Activated naive CD4-positive, alpha-beta T cell treated with anti-CD3 and anti-CD28 coated beads for 36 hours (primary cell): ENCODE measurements at regions of chr6 and their contacts with region 1.

Region 1: GRCh38 chr6:56359201-56359899 is 112.0 kb upstream of the COL21A1 start:
- DNase-seq: peak; percentile 82
- H3K4me3 Mint-ChIP-seq: no peak overlapping the region
- H3K27ac Mint-ChIP-seq: no peak overlapping the region
- H3K4me1 Mint-ChIP-seq: no peaks in the 10 kb centered on the region
- H3K27me3 Mint-ChIP-seq: no peaks in the 10 kb centered on the region

Region 2: DNA sequence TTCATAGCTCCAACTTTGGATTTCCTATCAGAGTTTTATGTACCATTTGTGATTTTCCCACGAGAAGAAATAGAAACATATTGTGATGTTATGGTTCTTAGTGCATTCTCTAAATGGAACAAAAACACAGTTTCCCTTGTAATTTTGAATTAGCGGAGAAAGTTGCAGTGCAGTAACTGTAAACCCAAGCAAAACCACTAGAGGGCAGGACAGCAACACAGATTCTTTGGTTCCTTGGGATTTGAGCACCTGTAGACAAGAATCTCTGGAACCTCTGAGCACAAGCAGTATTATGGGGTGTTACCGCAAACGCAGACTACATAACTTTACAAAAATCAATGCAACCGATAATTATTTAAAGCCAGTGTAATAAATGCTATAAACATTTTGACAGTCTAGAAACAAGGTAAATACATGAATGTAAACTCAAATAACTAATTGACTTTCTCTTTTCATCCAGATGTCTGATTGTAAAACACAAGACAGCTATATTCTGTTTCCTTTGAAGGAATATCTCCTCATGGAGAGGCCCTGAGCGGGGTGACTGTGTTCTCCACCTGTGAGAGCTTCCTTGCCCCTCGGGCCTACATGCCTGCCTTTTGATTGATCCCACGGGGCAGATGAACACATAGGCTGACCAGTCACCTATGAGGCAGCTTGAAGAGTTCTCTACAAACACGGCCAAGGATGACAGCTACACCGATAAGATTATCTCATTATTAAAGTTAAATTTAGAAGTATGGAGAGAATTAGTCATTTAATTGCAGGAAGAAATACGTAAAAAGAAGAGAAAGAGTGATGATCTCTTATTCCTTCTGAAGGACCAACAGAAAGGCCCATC is 44.4 kb before region 1 on chr6:
- CTCF ChIA-PET with region 1: interaction called, 3 read pairs
- intact Hi-C with region 1: loop called (anchors 1 kb)
- DNase-seq: peak; percentile 21
- H3K4me3 Mint-ChIP-seq: no peak overlapping the region
- H3K27ac Mint-ChIP-seq: no peak overlapping the region
- H3K4me1 Mint-ChIP-seq: no peaks in the 10 kb centered on the region
- H3K27me3 Mint-ChIP-seq: no peaks in the 10 kb centered on the region

Region 3: DNA sequence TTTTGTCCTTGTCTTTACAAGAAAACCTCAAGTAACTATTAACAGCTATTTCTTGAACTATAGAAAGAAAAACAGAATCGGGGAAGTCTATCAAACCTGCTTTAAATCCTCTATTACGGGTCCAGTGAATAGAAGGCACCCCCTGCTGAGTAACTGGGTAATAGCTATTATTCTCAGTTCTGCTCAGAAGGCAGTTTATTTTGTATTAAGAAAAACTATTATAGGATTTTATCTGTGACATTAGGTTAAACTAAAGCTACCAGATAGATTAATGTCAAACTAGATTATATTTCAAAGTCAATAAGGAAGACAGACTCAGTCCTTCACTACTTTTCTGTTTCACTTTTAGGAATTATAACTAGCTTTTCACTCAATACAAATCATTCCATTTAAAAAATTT is 189.7 kb after region 1 on chr6:
- CTCF ChIA-PET with region 1: interaction called, 3 read pairs
- intact Hi-C with region 1: loop called (anchors 1 kb)
- DNase-seq: no peak
- H3K4me3 Mint-ChIP-seq: no peak overlapping the region
- H3K27ac Mint-ChIP-seq: no peak overlapping the region
- H3K4me1 Mint-ChIP-seq: no peaks in the 10 kb centered on the region
- H3K27me3 Mint-ChIP-seq: no peaks in the 10 kb centered on the region

Region 4: DNA sequence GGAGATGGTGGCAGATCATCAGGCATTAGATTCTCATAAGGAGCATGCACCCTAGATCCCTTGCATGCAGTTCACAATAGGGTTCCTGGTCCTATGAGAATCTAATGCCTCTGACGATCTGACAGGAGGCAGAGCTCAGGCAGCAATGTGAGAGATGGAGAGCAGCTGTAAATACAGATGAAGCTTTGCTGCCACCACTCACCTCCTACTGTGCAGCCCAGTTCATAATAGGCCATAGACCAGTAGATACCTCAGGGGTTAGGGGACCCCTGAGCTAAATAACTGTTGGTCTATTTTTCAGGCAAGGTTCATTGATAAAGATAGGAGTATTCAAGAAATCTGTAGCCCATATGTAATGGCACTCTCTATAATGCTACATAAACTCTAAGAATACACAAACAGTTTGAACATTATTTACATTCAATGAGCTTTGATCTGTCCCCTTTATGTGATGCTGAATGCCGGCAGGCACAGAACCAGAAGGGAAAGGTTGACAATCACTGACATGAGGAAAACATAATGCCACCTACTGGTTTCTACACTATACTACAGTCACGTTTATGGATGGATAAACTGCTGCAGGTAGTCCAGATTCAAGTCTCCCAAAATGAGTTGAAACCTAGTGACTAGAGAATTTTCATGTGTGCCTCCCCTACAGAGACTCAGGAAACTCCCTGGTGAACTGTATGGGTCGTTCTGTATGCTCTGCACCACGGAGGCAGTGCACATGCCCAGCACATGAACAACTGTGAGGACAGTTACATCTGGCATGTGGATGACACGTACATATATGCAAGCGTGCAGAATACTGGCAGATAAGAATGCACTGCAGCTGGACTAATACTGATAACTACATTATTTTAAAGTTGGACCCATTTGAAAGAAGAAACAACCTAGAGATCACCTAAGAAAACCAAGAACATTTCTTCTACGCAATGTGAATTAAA is 211.3 kb after region 1 on chr6:
- CTCF ChIA-PET with region 1: interaction called, 13 read pairs
- intact Hi-C with region 1: loop called (anchors 1 kb)
- DNase-seq: no peak
- H3K4me3 Mint-ChIP-seq: no peak overlapping the region
- H3K27ac Mint-ChIP-seq: no peak overlapping the region
- H3K4me1 Mint-ChIP-seq: no peaks in the 10 kb centered on the region
- H3K27me3 Mint-ChIP-seq: no peaks in the 10 kb centered on the region

Region 5: GRCh38 chr6:56699066-56699654 is 339.8 kb after region 1 on chr6:
- CTCF ChIA-PET with region 1: interaction called, 4 read pairs
- intact Hi-C with region 1: loop called (anchors 1 kb)
- DNase-seq: no peak
- H3K4me3 Mint-ChIP-seq: no peak overlapping the region
- H3K27ac Mint-ChIP-seq: no peak overlapping the region
- H3K4me1 Mint-ChIP-seq: no peaks in the 10 kb centered on the region
- H3K27me3 Mint-ChIP-seq: peaks cover 2% of the 10 kb centered on the region

Region 6: DNA sequence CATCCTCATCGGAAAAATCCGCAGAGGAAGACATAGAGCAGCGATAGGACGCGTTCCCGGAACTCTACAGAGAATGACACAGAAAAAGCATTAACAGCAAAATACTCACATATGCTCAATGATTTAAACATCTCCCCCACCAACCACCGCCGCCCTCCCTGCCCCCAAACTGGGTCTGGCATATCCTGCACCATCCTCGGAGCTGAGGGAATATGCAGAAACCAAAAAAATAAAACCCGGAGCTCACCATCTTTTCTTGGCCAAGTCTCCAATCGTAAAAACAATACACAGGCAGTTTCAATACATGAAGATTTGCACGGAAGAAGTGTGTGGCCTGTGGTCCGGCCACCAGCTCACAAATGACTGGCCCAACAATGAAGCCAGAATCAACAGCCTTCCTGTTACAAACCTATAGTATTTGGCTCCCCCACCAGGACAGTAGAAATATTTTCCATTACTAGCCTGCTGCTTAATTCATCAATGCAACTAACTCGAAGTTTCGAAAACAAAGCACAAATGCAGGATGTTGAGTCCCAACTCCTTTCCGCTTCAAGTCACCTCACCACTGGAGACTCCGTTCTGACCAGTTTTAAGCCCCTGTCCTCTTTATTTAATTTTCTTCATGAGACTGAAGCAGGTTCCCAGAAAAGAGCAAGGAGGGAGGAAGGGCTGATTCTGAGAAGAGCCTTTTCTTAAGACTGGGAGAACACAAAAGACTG is 492.4 kb after region 1 on chr6:
- CTCF ChIA-PET with region 1: no interaction called
- intact Hi-C with region 1: loop called (anchors 1 kb)
- DNase-seq: peak; percentile 43
- H3K4me3 Mint-ChIP-seq: peak overlapping the region; percentile 67
- H3K27ac Mint-ChIP-seq: no peak overlapping the region
- H3K4me1 Mint-ChIP-seq: peaks cover 21% of the 10 kb centered on the region
- H3K27me3 Mint-ChIP-seq: peaks cover 38% of the 10 kb centered on the region